B cell (primary cell): ENCODE measurements at regions of chr4 and their contacts with region 1.

Region 1: DNA sequence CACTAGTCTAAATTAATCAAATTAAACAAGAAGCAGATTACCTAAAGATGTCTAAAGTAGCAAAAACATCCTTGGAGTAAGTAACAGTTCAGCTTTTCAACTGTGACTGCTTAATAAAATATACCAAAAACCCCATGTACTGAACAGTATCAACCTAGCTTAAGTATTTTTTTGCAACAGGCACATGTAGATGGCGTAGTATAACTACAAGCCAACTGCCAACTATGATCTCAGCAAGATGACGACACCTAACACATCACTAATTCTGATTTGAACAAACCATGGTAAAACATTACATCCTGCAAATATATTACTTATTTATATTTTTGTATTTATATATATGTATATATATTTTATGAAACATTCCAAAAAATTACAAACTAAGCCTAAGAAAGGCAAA is 24.5 kb downstream of the DHX15 start:
- DNase-seq: no peak
- ATAC-seq: no peak
- H3K4me3 ChIP-seq: no peak overlapping the region
- H3K4me3 Mint-ChIP-seq: no peak overlapping the region
- H3K27ac ChIP-seq: no peak overlapping the region
- H3K27ac Mint-ChIP-seq: peak overlapping the region; percentile 28
- H3K4me1 ChIP-seq: peaks cover 12 to 26% of the 10 kb centered on the region in 2 donors
- H3K4me1 Mint-ChIP-seq: peaks cover 61% of the 10 kb centered on the region
- H3K27me3 ChIP-seq: no peaks in the 10 kb centered on the region
- H3K27me3 Mint-ChIP-seq: no peaks in the 10 kb centered on the region
- CTCF ChIP-seq: no peak

Region 2: GRCh38 chr4:23114538-23114937 is 1445.4 kb before region 1 on chr4:
- CTCF ChIA-PET with region 1: no interaction called
- POLR2A ChIA-PET with region 1: no interaction called
- intact Hi-C with region 1: no loop called
- DNase-seq: no peak
- ATAC-seq: no peak
- H3K4me3 ChIP-seq: no peak overlapping the region
- H3K4me3 Mint-ChIP-seq: no peak overlapping the region
- H3K27ac ChIP-seq: no peak overlapping the region
- H3K27ac Mint-ChIP-seq: no peak overlapping the region
- H3K4me1 ChIP-seq: no peaks in the 10 kb centered on the region
- H3K4me1 Mint-ChIP-seq: no peaks in the 10 kb centered on the region
- H3K27me3 ChIP-seq: no peaks in the 10 kb centered on the region
- H3K27me3 Mint-ChIP-seq: no peaks in the 10 kb centered on the region
- CTCF ChIP-seq: no peak

Region 3: DNA sequence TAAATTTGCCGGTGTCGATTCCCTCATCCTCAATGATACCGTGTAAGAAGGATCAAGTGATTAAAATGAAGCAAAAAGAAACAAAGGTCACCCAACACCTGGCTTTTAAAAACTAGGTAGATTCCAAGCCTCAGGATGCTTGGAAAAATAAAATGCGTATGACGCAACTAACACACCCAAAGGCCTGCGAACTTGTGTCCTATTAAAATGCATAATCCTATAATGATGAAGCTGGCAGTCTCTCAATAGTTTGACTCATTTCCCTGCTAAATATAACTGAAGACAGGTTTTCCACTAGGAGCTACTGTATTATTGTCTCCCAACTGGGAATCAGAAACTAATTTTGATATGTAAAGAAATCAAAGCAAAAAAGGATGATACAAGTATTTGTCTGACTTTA is 238.7 kb before region 1 on chr4:
- CTCF ChIA-PET with region 1: no interaction called
- POLR2A ChIA-PET with region 1: no interaction called
- intact Hi-C with region 1: no loop called
- DNase-seq: no peak
- ATAC-seq: no peak
- H3K4me3 ChIP-seq: no peak overlapping the region
- H3K4me3 Mint-ChIP-seq: no peak overlapping the region
- H3K27ac ChIP-seq: no peak overlapping the region
- H3K27ac Mint-ChIP-seq: no peak overlapping the region
- H3K4me1 ChIP-seq: no peaks in the 10 kb centered on the region
- H3K4me1 Mint-ChIP-seq: no peaks in the 10 kb centered on the region
- H3K27me3 ChIP-seq: no peaks in the 10 kb centered on the region
- H3K27me3 Mint-ChIP-seq: no peaks in the 10 kb centered on the region
- CTCF ChIP-seq: no peak

Region 4: DNA sequence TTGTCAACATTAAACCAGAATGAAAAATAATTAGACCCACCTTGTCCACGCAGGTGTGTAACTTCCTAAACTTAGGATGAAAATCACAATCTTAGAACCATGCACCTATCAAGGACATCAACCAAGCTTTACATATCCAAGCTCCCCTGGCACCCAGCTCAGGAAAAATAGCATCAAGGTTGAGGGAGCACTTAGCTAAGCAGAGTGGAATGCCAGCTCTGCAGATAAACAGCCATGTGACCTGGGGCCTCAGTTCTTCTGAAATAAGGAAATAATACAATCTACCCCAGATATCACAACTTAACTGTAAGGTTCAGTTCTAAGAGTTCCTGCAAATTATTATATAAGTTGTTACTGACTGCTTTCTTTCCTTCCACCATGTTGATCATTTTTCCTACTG is 40.2 kb before region 1 on chr4:
- CTCF ChIA-PET with region 1: no interaction called
- POLR2A ChIA-PET with region 1: no interaction called
- intact Hi-C with region 1: loop called (anchors 5 kb)
- DNase-seq: no peak
- ATAC-seq: no peak
- H3K4me3 ChIP-seq: no peak overlapping the region
- H3K4me3 Mint-ChIP-seq: no peak overlapping the region
- H3K27ac ChIP-seq: no peak overlapping the region
- H3K27ac Mint-ChIP-seq: no peak overlapping the region
- H3K4me1 ChIP-seq: no peaks in the 10 kb centered on the region
- H3K4me1 Mint-ChIP-seq: no peaks in the 10 kb centered on the region
- H3K27me3 ChIP-seq: no peaks in the 10 kb centered on the region
- H3K27me3 Mint-ChIP-seq: no peaks in the 10 kb centered on the region
- CTCF ChIP-seq: no peak

Region 5: DNA sequence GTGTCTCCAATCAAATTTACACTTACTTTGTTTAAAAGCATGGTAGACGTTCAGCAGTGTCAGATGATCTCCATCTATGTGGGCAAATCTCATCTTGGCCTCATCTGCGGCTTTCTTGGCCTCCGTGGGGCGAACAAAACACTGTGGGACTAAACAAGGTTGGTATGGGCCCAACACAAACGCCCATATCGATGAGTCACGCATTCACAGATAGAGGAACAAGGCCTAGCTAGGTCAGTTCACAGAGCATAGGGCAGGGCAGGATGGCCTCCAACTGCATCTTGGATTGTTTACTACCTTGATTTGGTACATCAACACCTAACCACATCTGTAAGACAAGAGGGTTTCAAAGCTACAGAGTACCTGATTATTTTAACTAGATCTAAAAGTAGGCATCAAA is 22.9 kb before region 1 on chr4:
- CTCF ChIA-PET with region 1: no interaction called
- POLR2A ChIA-PET with region 1: no interaction called
- intact Hi-C with region 1: no loop called
- DNase-seq: no peak
- ATAC-seq: no peak
- H3K4me3 ChIP-seq: no peak overlapping the region
- H3K4me3 Mint-ChIP-seq: no peak overlapping the region
- H3K27ac ChIP-seq: no peak overlapping the region
- H3K27ac Mint-ChIP-seq: no peak overlapping the region
- H3K4me1 ChIP-seq: no peaks in the 10 kb centered on the region
- H3K4me1 Mint-ChIP-seq: no peaks in the 10 kb centered on the region
- H3K27me3 ChIP-seq: no peaks in the 10 kb centered on the region
- H3K27me3 Mint-ChIP-seq: no peaks in the 10 kb centered on the region
- CTCF ChIP-seq: no peak

Region 6: GRCh38 chr4:24640366-24640765 is 80.5 kb after region 1 on chr4:
- CTCF ChIA-PET with region 1: no interaction called
- POLR2A ChIA-PET with region 1: no interaction called
- intact Hi-C with region 1: no loop called
- DNase-seq: no peak
- ATAC-seq: no peak
- H3K4me3 ChIP-seq: no peak overlapping the region
- H3K4me3 Mint-ChIP-seq: no peak overlapping the region
- H3K27ac ChIP-seq: no peak overlapping the region
- H3K27ac Mint-ChIP-seq: no peak overlapping the region
- H3K4me1 ChIP-seq: no peaks in the 10 kb centered on the region
- H3K4me1 Mint-ChIP-seq: no peaks in the 10 kb centered on the region
- H3K27me3 ChIP-seq: peaks cover 0 to 4% (median 2%) of the 10 kb centered on the region in 4 experiments
- H3K27me3 Mint-ChIP-seq: peaks cover 24% of the 10 kb centered on the region
- CTCF ChIP-seq: no peak